Right lobe of liver (tissue), 6 donors: ENCODE measurements at regions of chr9 and their contacts with region 1.

Region 1: GRCh38 chr9:35664531-35665470 is at the start of gene ARHGEF39:
- DNase-seq: peak; percentile 85 to 87 (median 85)
- ATAC-seq: peak; percentile 82 to 88 (median 87)
- H3K4me3 ChIP-seq: peak within 1 kb of the TSS; percentile 18 to 58 (median 48)
- H3K27ac ChIP-seq: peak within 1 kb of the TSS in 1 of 3 donors; percentile 26
- H3K4me1 ChIP-seq: peaks cover 0 to 38% (median 7%) of the 10 kb centered on the region in 4 donors
- H3K27me3 ChIP-seq: no peaks in the 10 kb centered on the region
- CTCF ChIP-seq: peak in 2 of 4 donors; percentile 18 to 25
- POLR2A ChIP-seq: peak; percentile 49
- total RNA-seq, gene ARHGEF39: 0.11 to 3.6 (median 0.43) TPM

Region 2: DNA sequence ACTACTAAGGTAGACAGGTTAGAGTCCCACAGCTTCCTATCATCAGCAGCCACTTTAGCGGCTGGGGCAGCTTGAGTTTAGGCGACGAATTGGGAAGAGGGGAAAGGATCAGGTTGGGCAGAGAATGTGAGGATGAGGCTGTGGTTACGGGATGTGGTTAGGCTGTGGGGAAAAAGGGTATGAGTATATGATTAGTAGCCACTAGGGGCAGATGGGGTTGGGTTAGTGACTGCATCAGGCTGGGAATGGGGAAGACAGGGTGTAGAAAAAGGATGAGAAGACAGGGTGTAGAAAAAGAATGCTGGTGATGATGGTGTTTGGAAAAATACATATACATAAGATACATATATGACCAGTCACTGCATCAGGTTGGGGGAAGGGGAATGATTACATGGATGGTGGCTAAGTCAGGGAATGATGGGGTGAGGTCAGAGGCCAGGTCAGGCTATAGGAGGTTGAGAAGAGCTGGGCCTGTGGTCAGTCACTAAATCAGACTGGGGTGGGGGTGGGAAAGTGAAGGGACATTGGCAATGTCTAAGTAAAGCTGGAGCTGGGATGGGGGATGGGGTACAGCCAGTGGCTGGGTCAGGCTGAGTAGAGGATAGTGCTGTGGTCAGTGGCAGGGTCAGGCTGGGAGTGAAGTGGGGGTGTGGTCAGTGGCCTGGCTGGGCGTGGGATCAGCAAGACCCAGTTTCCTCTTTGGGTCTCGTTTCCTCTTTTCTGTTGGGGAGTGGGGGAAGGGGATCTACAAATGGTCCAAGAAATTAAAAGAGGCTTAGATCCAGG is 65.1 kb after region 1 on chr9:
- intact Hi-C with region 1: loop called (anchors 5 to 10 kb)
- DNase-seq: peak; percentile 73 to 80 (median 73)
- ATAC-seq: peak in 3 of 4 donors; percentile 2 to 9 (median 8)
- H3K4me3 ChIP-seq: peak overlapping the region; percentile 21 to 85 (median 70)
- H3K27ac ChIP-seq: peak overlapping the region; percentile 97 to 100 (median 98)
- H3K4me1 ChIP-seq: peaks cover 0 to 65% (median 23%) of the 10 kb centered on the region in 4 donors
- H3K27me3 ChIP-seq: no peaks in the 10 kb centered on the region
- CTCF ChIP-seq: peak; percentile 31 to 39 (median 36)
- POLR2A ChIP-seq: no peak